Sigmoid colon (tissue), 7 donors: ENCODE measurements at regions of chr2 and their contacts with region 1.

Region 1: DNA sequence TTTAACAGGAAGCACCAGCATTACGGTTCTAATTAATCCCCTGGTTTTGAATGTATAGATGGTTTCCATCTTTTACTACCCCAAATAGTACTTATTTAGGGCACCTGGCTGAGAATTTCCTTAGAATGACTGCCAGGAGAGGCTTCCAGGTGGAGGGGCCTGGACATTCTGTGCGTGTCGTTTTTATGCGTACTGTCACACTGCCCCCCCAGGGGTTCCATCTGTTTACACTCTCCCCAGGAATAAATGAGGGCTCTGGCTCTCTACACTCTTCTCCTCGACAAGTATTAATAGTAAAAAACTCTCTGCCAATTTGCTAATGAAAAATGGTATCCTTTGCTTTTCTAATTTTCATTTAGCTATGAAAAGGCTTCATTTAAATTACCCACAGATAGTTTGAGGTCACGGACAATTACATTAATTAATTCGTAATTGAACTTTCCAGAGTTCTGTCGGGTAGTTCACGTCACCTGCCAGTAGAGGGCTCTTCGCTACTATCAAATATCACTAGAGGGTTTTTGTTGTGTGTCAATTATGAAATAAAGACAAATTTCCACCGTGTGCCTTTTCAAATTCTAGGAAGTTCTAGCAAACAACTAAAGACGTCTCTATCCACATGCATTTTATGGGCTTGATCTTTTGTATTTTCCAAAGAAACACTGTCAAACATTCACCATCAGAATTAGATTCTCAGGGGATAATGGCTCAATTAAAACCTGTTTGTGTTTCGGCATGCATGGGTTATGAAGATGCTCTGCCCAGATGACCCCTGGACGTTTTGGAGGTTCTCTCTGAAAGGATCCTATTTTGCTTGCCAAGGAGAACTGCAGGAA is 88.8 kb upstream of the ASB18 start:
- DNase-seq: no peak
- H3K4me3 ChIP-seq: no peak overlapping the region
- H3K27ac ChIP-seq: no peak overlapping the region
- H3K4me1 ChIP-seq: peaks cover 0 to 7% (median 0%) of the 10 kb centered on the region in 4 donors
- H3K27me3 ChIP-seq: no peaks in the 10 kb centered on the region
- CTCF ChIP-seq: peak; percentile 61 to 86 (median 83)
- EP300 ChIP-seq: no peak
- POLR2A ChIP-seq: no peak

Region 2: DNA sequence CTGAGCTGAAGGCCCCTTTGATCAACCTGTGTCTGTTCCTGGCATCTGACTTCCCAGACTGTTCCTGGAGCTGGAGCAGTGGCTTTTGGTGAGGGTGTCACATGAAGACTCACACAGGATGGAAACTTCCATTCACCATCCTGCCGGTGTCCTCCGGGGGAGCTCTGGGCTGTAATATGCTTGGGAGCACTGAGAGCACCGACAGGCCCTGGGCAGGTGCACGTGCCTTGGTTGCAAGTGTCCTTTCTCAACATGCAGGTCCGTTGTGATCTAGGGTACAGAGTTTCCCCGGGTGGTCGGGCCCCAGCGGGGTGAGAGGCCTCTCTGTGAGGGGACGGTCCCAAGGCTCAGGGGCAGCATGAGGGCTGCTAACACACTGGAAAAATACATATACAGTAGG is 159.9 kb before region 1 on chr2:
- intact Hi-C with region 1: no loop called
- DNase-seq: peak; percentile 29
- H3K4me3 ChIP-seq: no peak overlapping the region
- H3K27ac ChIP-seq: no peak overlapping the region
- H3K4me1 ChIP-seq: no peaks in the 10 kb centered on the region
- H3K27me3 ChIP-seq: no peaks in the 10 kb centered on the region
- CTCF ChIP-seq: no peak
- EP300 ChIP-seq: no peak
- POLR2A ChIP-seq: no peak

Region 3: GRCh38 chr2:236512902-236513435 is 160.0 kb after region 1 on chr2:
- intact Hi-C with region 1: loop called (anchors 5 kb)
- DNase-seq: peak; percentile 73
- H3K4me3 ChIP-seq: no peak overlapping the region
- H3K27ac ChIP-seq: peak overlapping the region in 2 of 4 donors; percentile 8 to 16
- H3K4me1 ChIP-seq: peaks cover 0 to 22% (median 9%) of the 10 kb centered on the region in 4 donors
- H3K27me3 ChIP-seq: no peaks in the 10 kb centered on the region
- CTCF ChIP-seq: peak; percentile 69 to 87 (median 86)
- EP300 ChIP-seq: no peak
- POLR2A ChIP-seq: no peak

Region 4: GRCh38 chr2:236569573-236569973 is 216.6 kb after region 1 on chr2 and contains the start of gene ACKR3:
- intact Hi-C with region 1: loop called (anchors 5 kb)
- DNase-seq: peak; percentile 92
- H3K4me3 ChIP-seq: peak within 1 kb of the TSS; percentile 28 to 57 (median 46)
- H3K27ac ChIP-seq: peak within 1 kb of the TSS; percentile 85 to 93 (median 87)
- H3K4me1 ChIP-seq: peaks cover 0 to 76% (median 47%) of the 10 kb centered on the region in 4 donors
- H3K27me3 ChIP-seq: no peaks in the 10 kb centered on the region
- CTCF ChIP-seq: peak in 3 of 4 experiments; percentile 30 to 44 (median 32)
- EP300 ChIP-seq: no peak
- POLR2A ChIP-seq: peak in 1 of 2 donors; percentile 60
- total RNA-seq, gene ACKR3: 17.0 to 39.1 (median 21.6) TPM

Region 5: DNA sequence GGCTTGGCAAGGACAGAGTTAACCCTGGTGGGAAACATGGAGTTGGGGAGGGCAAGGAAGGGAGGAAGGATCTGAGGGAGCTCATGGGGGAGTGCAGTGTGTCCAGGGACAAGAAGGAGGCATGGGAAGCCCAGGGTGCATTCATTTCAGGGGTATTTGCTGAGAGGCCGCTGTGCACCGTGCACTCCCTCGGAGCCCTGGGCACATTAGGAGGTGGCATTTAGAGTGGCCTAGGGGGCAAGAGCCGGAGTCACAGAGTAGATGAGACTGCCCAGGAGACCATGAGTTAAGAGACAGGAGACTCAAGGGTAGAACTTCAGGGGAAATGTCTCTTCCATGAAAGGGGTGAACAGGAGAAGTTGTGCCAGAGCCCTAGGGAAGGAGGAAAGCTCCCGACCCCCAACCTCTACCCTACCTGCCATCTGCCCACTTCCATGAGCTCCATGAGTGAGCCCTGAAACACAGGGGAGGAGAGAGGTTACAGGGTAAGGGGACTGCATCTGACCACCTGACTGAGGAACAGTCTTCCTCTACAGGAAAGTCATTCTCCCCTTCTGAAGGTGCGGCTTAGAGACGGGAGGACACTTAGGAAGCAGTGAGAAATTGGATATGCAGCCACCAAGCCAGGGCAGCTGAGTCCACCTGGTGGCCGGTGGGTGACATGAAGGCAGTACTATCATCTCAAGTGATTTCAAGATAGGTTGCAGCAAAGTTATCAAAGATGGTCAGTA is 674.2 kb after region 1 on chr2:
- intact Hi-C with region 1: loop called (anchors 10 kb)
- DNase-seq: peak; percentile 87
- H3K4me3 ChIP-seq: no peak overlapping the region
- H3K27ac ChIP-seq: no peak overlapping the region
- H3K4me1 ChIP-seq: peaks cover 0 to 7% (median 0%) of the 10 kb centered on the region in 4 donors
- H3K27me3 ChIP-seq: no peaks in the 10 kb centered on the region
- CTCF ChIP-seq: peak; percentile 77 to 84 (median 82)
- EP300 ChIP-seq: no peak
- POLR2A ChIP-seq: no peak

Region 6: DNA sequence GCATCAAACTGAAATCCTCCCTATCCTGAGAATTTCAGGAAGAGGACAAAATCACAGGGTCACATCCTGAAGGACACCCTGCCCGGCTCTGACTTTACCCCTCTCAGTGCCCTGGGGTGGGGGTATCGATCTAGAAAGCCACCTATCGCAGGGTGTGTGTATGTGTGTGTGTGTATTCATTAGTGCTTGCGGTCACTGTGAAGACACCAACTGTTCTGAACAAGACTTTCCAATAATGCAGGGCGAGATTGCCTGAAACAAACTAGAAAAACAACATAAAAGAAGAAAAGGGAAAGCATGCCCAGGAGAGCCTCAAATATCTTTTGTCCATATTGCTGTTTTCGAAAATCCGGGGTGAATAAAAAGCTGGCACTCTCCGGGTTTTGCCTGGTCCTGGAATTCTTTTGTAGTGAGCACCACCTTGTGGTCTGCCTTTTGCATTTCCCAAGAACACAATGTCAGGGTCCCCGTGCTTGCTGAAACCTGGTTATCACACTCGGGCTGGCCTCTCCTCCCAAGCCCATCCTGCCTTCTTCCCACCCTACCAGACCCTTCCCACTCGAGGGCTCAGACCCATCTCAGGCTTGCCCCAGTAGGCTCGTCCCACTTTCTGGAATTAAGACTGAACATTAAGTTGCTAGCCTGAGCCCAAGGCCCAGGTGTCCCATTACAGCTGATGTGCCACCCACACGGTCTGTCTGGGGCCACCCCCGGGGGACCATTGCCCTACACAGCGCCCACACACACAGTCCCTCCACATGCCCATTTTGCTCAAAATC is 707.7 kb after region 1 on chr2:
- intact Hi-C with region 1: loop called (anchors 2 kb)
- DNase-seq: no peak
- H3K4me3 ChIP-seq: no peak overlapping the region
- H3K27ac ChIP-seq: no peak overlapping the region
- H3K4me1 ChIP-seq: peaks cover 0 to 7% (median 3%) of the 10 kb centered on the region in 4 donors
- H3K27me3 ChIP-seq: no peaks in the 10 kb centered on the region
- CTCF ChIP-seq: peak; percentile 17 to 69 (median 58)
- EP300 ChIP-seq: no peak
- POLR2A ChIP-seq: no peak